Spleen (tissue), 13 donors: ENCODE measurements at regions of chr7 and their contacts with region 1.

Region 1: GRCh38 chr7:101688183-101688831 is 59.2 kb upstream of the MYL10 start:
- DNase-seq: peak; percentile 96
- H3K4me3 ChIP-seq: peak overlapping the region in 5 of 8 donors; percentile 10 to 52 (median 15)
- H3K27ac ChIP-seq: peak overlapping the region in 5 of 8 donors; percentile 20 to 61 (median 22)
- H3K4me1 ChIP-seq: peaks cover 7 to 29% (median 16%) of the 10 kb centered on the region in 6 donors
- H3K27me3 ChIP-seq: peaks cover 0 to 16% (median 0%) of the 10 kb centered on the region in 7 donors
- CTCF ChIP-seq: peak; percentile 92 to 98 (median 96)
- POLR2A ChIP-seq: no peak

Region 2: DNA sequence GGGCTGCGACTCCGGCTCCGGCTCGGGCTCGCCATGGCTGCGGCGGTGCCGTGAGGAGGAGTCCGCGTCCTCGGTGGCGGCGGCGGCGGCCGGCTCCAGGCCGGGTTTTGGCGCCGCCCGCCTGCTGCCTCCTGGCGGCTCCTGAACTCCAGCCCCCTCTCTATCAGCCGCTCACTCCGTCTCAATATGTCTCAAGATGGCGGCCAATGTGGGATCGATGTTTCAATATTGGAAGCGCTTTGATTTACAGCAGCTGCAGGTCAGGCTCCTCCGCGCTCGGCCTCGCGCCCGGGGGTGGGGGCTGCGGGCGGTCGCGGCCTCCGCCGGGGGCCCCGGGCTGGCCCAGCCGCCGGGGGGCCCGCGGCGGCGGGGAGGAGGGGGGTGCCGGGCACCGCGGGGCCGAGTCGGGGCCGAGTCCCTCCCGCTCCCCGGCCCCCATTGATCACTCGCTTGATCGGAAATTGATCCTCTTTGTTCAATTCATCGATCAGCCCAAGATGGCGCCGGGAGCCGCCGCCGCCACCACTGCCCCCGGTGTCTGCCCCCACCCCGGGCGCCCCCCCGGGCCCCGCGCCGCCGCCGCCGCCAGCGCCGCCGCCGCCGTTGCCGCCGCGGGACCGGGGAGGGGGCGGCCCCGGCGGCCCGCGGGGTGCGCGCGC is 127.7 kb after region 1 on chr7:
- intact Hi-C with region 1: loop called (anchors 5 kb)
- DNase-seq: peak; percentile 93
- H3K4me3 ChIP-seq: peak overlapping the region; percentile 42 to 96 (median 74)
- H3K27ac ChIP-seq: peak overlapping the region in 7 of 8 donors; percentile 69 to 97 (median 78)
- H3K4me1 ChIP-seq: peaks cover 3 to 60% (median 39%) of the 10 kb centered on the region in 6 donors
- H3K27me3 ChIP-seq: no peaks in the 10 kb centered on the region
- CTCF ChIP-seq: peak in 6 of 11 experiments; percentile 10 to 52 (median 24)
- POLR2A ChIP-seq: no peak

Region 3: GRCh38 chr7:101882595-101883564 is 194.6 kb after region 1 on chr7:
- intact Hi-C with region 1: no loop called
- DNase-seq: no peak
- H3K4me3 ChIP-seq: no peak overlapping the region
- H3K27ac ChIP-seq: peak overlapping the region in 7 of 8 donors; percentile 12 to 79 (median 42)
- H3K4me1 ChIP-seq: peaks cover 22 to 84% (median 59%) of the 10 kb centered on the region in 6 donors
- H3K27me3 ChIP-seq: no peaks in the 10 kb centered on the region
- CTCF ChIP-seq: no peak
- POLR2A ChIP-seq: no peak

Region 4: GRCh38 chr7:102236592-102237287 is 548.4 kb after region 1 on chr7:
- intact Hi-C with region 1: loop called (anchors 2 kb)
- DNase-seq: peak; percentile 81
- H3K4me3 ChIP-seq: no peak overlapping the region
- H3K27ac ChIP-seq: no peak overlapping the region
- H3K4me1 ChIP-seq: peaks cover 0 to 5% (median 0%) of the 10 kb centered on the region in 6 donors
- H3K27me3 ChIP-seq: no peaks in the 10 kb centered on the region
- CTCF ChIP-seq: peak in 10 of 11 experiments; percentile 43 to 82 (median 71)
- POLR2A ChIP-seq: no peak